ENCODE measurements at regions of chr6 and their contacts with region 1.

Region 1: DNA sequence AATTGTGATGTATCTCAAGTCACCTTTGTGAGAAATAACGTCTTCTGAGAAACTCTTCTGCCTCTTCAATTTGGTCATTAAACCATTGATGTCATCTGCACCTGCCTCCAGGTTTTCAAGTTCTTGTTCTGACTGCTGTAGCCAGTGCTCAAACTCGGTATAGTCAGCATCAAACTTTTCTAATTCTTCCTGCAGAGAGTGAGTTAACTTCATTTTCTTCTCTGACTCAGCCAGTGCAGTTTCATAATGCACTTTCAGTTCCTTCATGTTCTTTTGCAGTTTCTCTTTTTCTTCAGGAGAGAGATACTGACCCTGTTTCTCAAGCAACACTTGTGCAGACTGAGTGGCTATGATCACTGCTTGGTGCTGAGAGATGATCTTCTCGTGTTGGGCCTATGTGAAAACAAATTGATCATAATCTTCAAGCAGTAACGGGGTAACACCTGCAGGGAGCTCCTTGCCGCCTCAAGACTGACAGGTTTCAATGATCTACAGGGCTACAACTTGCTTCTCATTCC is 48.8 kb downstream of the DST start:
- DNase-seq: no peak
- ATAC-seq: no peak
- H3K4me3 ChIP-seq: no peak overlapping the region
- H3K27ac ChIP-seq: no peak overlapping the region
- H3K4me1 ChIP-seq: no peaks in the 10 kb centered on the region
- H3K27me3 ChIP-seq: no peaks in the 10 kb centered on the region
- CTCF ChIP-seq: no peak
- POLR2A ChIP-seq: no peak

Region 2: GRCh38 chr6:56359201-56359899 is 234.5 kb before region 1 on chr6:
- intact Hi-C with region 1: loop called (anchors 5 kb)
- DNase-seq: peak; percentile 73 to 83 (median 78)
- ATAC-seq: peak; percentile 90
- H3K4me3 ChIP-seq: no peak overlapping the region
- H3K27ac ChIP-seq: no peak overlapping the region
- H3K4me1 ChIP-seq: no peaks in the 10 kb centered on the region
- H3K27me3 ChIP-seq: no peaks in the 10 kb centered on the region
- CTCF ChIP-seq: peak; percentile 50 to 93 (median 88)
- POLR2A ChIP-seq: no peak